K562 (cell line): ENCODE measurements at regions of chr4 and their contacts with region 1.

Region 1: DNA sequence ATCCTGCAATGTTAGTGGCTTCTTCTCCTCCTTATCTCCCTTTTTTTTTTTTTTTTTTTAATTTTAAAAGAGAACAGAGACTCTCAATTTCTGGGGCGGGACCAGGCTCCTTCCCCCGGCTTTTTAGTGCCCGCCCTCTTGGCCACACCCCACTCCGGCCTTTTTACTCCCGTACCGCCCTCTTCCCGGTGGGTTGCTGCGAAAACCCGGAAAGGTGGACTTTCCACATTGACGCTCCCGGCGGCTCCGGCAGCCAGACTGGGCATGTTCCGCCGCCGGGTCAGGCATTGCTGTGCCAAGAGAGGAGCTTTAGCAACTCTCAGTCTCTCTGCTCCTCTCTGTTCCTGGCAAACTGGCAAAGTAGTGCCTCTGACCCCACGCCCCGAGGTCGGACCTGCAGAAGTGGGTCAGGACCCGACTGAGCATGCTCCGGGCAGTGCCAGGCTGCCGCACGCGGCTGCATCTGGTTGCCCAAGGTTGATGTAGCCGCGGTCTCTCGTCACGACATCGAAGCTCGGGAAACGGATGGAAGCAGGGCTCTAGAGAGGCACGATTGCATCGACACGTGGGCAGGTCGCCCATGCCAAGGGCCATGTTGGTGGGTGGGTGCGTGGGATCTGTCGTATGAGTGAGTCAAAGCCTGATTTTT is 1.1 kb upstream of the MFAP3L start:
- DNase-seq: peak; percentile 91 to 96 (median 94)
- ATAC-seq: peak; percentile 93
- H3K4me3 ChIP-seq: peak overlapping the region; percentile 83
- H3K27ac ChIP-seq: peak overlapping the region; percentile 55; the same call in 2 of the 3 replicates
- H3K4me1 ChIP-seq: peaks cover 3 to 20% of the 10 kb centered on the region in 2 experiments; a peak in 3 of 5 replicates
- H3K27me3 ChIP-seq: peaks cover 3 to 5% of the 10 kb centered on the region in 2 experiments
- CTCF ChIP-seq: no peak
- EP300 ChIP-seq: no peak
- POLR2A ChIP-seq: no peak
- RAD21 ChIP-seq: no peak

Region 2: GRCh38 chr4:169619959-169620879 is 407.1 kb before region 1 on chr4 and contains the start of gene CLCN3:
- CTCF ChIA-PET with region 1: no interaction called
- POLR2A ChIA-PET with region 1: no interaction called
- in situ Hi-C with region 1: loop called (anchors 25 kb)
- intact Hi-C with region 1: no loop called
- DNase-seq: peak; percentile 94 to 99 (median 96)
- ATAC-seq: peak; percentile 91
- H3K4me3 ChIP-seq: peak within 1 kb of the TSS; percentile 53
- H3K27ac ChIP-seq: peak within 1 kb of the TSS; percentile 98
- H3K4me1 ChIP-seq: peaks cover 4 to 31% of the 10 kb centered on the region in 2 experiments; a peak in 4 of 5 replicates
- H3K27me3 ChIP-seq: no peaks in the 10 kb centered on the region
- CTCF ChIP-seq: peak in 1 of 3 experiments; percentile 11; a peak in 1 of 6 replicates
- EP300 ChIP-seq: peak; percentile 35
- POLR2A ChIP-seq: peak; percentile 95
- RAD21 ChIP-seq: peak; percentile 5 to 17; a peak in 2 of 4 replicates
- polyA plus RNA-seq, gene CLCN3: 12.7 to 22.8 TPM

Region 3: GRCh38 chr4:169810325-169811323 is 216.7 kb before region 1 on chr4:
- CTCF ChIA-PET with region 1: no interaction called
- POLR2A ChIA-PET with region 1: no interaction called
- in situ Hi-C with region 1: no loop called
- intact Hi-C with region 1: loop called (anchors 5 kb)
- DNase-seq: peak; percentile 63 to 73 (median 68)
- ATAC-seq: peak; percentile 90
- H3K4me3 ChIP-seq: no peak overlapping the region
- H3K27ac ChIP-seq: no peak overlapping the region
- H3K4me1 ChIP-seq: no peaks in the 10 kb centered on the region
- H3K27me3 ChIP-seq: peaks cover 0 to 4% of the 10 kb centered on the region in 2 experiments; a peak in 1 of 5 replicates
- CTCF ChIP-seq: peak; percentile 64 to 86 (median 74); a peak in 5 of 6 replicates
- EP300 ChIP-seq: no peak
- POLR2A ChIP-seq: no peak
- RAD21 ChIP-seq: peak; percentile 80

Region 4: DNA sequence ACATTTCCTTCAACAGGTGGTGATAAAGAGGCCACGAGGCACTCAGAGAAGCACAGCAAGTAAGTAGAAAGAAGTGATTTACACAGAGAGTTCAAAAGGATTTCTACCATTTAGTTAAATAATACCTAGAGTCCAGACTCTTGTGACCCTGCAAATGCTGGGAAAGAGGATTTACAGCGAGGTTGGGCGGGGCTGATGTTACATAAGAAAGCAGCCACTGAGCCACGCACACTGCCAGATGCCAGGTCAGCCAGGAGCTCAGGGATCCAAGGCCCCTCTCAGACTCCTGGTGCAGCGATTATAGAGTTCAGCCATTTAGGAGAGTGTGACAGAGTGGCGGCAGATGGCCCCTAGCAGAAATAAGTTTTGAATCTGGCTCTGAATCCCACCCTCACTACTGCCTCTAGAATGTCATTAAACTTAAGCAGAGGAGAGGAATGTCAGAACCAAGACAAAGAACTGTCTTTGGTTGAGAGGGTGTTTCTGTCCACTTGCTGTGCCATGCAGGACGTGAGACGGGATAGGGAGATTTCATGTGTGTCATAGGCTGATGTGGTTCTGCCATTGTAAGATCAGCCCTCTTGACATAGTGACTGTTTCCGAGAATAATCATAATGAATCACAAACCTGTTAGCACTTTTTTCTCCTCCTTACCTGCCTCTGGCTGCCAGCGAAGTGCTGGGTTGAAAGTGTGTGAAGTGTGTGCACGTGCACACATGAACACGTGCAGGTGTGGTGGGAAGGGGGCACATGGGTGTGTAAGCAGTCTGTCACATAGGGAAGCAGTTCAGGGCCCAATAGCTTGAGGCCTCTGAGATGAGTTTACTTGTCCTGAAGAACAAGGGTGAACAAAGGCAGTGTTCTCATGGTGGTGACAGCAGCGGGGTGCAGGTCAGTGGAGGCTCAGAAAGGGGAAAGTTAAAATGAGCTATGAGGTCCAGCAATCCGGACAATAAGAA is 51.2 kb before region 1 on chr4:
- CTCF ChIA-PET with region 1: no interaction called
- POLR2A ChIA-PET with region 1: no interaction called
- in situ Hi-C with region 1: no loop called
- intact Hi-C with region 1: loop called (anchors 1 kb)
- DNase-seq: no peak
- ATAC-seq: no peak
- H3K4me3 ChIP-seq: no peak overlapping the region
- H3K27ac ChIP-seq: no peak overlapping the region
- H3K4me1 ChIP-seq: no peaks in the 10 kb centered on the region
- H3K27me3 ChIP-seq: peaks cover 0 to 8% of the 10 kb centered on the region in 2 experiments; a peak in 2 of 5 replicates
- CTCF ChIP-seq: no peak
- EP300 ChIP-seq: no peak
- POLR2A ChIP-seq: no peak
- RAD21 ChIP-seq: no peak

Region 5: DNA sequence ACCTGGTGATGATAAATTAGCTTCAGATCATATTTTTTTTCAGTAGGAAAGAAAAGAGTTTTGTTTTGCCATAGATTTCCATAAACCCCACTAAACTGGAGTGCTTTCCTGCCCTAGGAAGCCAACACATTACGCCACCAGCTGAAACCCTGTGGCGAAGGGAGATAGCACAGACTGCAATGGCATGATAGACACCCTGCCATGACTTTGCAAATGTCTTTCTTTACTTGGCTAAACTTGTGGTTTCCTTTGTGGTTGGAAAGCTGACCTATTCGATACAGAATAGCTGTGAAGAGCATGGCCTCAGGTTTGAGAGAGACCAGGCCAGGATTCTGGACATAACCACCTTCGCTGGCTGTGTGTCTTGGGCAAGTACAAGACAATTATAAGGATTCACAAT is 20.2 kb before region 1 on chr4:
- CTCF ChIA-PET with region 1: no interaction called
- POLR2A ChIA-PET with region 1: no interaction called
- in situ Hi-C with region 1: no loop called
- intact Hi-C with region 1: loop called (anchors 2 kb)
- DNase-seq: peak; percentile 63 to 80 (median 66)
- ATAC-seq: peak; percentile 96
- H3K4me3 ChIP-seq: no peak overlapping the region
- H3K27ac ChIP-seq: no peak overlapping the region
- H3K4me1 ChIP-seq: peaks cover 0 to 13% of the 10 kb centered on the region in 2 experiments; a peak in 3 of 5 replicates
- H3K27me3 ChIP-seq: no peaks in the 10 kb centered on the region; a peak in 1 of 5 replicates
- CTCF ChIP-seq: no peak
- EP300 ChIP-seq: peak; percentile 94
- POLR2A ChIP-seq: no peak
- RAD21 ChIP-seq: 0 out of 4 replicates have a peak, but pooled peaks of 1 of the 2 experiments have one; percentile 19

Region 6: GRCh38 chr4:170128219-170128804 is 101.0 kb after region 1 on chr4:
- CTCF ChIA-PET with region 1: no interaction called
- POLR2A ChIA-PET with region 1: no interaction called
- in situ Hi-C with region 1: no loop called
- intact Hi-C with region 1: no loop called
- DNase-seq: no peak
- ATAC-seq: no peak
- H3K4me3 ChIP-seq: no peak overlapping the region
- H3K27ac ChIP-seq: no peak overlapping the region
- H3K4me1 ChIP-seq: no peaks in the 10 kb centered on the region
- H3K27me3 ChIP-seq: no peaks in the 10 kb centered on the region
- CTCF ChIP-seq: no peak
- EP300 ChIP-seq: no peak
- POLR2A ChIP-seq: no peak
- RAD21 ChIP-seq: no peak